ENCODE measurements at regions of chr1 and their contacts with region 1.

Region 1: GRCh38 chr1:230849451-230850224 is 18.7 kb downstream of the C1orf198 start:
- DNase-seq: peak; percentile 93
- H3K4me3 ChIP-seq: no peak overlapping the region
- H3K27ac ChIP-seq: peak overlapping the region; percentile 78
- H3K4me1 ChIP-seq: peaks cover 22% of the 10 kb centered on the region
- H3K27me3 ChIP-seq: no peaks in the 10 kb centered on the region
- CTCF ChIP-seq: no peak
- POLR2A ChIP-seq: no peak

Region 2: DNA sequence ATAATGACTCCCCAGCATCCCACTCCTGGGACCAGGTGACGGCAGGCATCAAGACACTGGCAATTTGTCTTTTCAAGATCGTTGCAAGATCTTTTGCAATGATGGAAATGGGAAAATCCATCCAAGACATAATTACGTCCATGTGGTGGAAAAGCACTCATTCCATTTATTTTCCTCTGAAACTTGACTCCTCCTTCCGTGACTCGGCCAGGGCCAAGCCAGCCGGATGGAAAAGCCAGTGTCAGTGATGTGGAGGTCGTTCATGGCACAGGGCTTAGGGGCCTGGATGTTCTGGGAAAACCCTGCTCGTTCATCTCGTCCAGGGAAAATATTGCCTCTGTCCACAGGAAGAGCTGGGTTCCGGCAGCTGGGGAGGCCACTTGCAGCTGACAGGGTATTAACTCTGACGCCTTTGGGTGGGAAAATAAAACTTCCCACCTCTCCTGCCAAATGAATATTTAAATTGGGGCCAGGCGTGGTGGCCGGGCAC is 27.5 kb before region 1 on chr1:
- CTCF ChIA-PET with region 1: no interaction called
- POLR2A ChIA-PET with region 1: no interaction called
- dilution Hi-C with region 1: no loop called
- intact Hi-C with region 1: loop called (anchors 1 kb)
- DNase-seq: peak; percentile 59
- H3K4me3 ChIP-seq: no peak overlapping the region
- H3K27ac ChIP-seq: no peak overlapping the region
- H3K4me1 ChIP-seq: peaks cover 4% of the 10 kb centered on the region
- H3K27me3 ChIP-seq: no peaks in the 10 kb centered on the region
- CTCF ChIP-seq: no peak
- POLR2A ChIP-seq: no peak

Region 3: DNA sequence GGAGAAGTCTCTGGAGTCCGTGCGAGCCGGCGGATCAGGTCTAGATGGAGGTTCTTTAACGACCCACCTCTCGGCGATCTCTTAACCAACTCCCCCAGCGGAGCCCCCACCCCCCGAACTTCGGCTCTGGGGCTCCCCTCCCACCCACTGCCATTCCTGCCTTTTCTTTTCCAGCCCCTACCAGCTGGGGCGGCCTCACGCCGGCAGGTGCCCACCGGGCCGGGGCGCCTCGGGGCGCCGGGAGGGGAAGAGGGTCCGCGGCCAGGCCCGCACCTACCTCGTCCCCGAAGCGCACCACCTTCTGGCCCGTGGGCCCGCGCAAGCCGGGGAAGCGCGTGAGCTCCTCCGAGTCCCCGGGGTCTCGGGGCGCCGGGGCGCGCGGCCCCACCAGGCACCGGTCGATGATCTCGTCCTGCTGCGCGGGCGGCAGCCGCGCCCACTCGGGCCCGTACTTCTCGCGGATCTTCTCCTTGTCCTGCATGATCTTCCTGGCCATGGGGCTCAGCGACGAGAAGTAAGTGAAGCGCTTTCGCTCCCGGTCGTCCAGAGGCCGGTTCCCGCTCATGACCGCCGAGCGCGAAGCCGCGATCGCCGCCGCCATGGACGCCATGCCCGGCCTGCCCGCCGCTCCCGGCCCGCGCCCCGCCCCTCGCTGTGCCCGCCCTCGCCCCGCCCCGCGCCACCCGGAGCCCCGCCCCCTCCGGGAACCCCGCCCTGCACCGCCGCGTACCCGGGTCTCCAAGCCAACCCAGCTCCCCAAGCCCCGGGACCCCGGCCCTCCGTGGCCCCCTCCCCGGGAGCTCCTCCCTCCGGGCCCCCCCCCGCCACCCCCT is 18.5 kb after region 1 on chr1 and contains the start of gene C1orf198:
- CTCF ChIA-PET with region 1: interaction called, 3 read pairs
- POLR2A ChIA-PET with region 1: interaction called, 6 read pairs
- dilution Hi-C with region 1: no loop called
- intact Hi-C with region 1: loop called (anchors 1 kb)
- DNase-seq: peak; percentile 60
- H3K4me3 ChIP-seq: peak within 1 kb of the TSS; percentile 70 to 93 (median 83)
- H3K27ac ChIP-seq: peak within 1 kb of the TSS; percentile 33
- H3K4me1 ChIP-seq: peaks cover 20% of the 10 kb centered on the region
- H3K27me3 ChIP-seq: no peaks in the 10 kb centered on the region
- CTCF ChIP-seq: no peak
- POLR2A ChIP-seq: peak; percentile 65
- total RNA-seq, gene C1orf198: 27.7 and 29.2 TPM in 2 replicates

Measured in endothelial cell of umbilical vein (primary cell).